ENCODE measurements at regions of chr17 and their contacts with region 1.

Region 1: DNA sequence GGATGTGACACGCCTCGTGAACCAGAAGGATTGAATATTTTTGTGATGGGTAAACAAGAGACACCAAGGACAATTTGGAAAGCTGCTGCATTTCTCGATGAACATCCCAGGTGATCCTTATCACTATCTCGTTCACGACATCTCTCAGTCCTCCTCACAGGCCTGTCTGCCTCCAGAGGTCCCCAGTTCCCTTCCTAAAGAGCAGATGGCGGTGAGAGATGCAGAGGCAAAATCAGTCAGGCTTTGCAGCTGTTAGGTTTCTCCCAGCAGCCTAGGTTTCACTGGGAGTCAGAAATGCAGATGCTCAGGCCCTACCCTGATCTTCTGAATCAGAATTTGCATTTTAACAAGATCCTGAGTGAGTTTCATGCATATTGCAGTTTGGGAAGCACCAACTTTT is 23.6 kb downstream of the SCPEP1 start:
- DNase-seq: no peak
- ATAC-seq: no peak
- H3K4me3 Mint-ChIP-seq: no peak overlapping the region
- H3K27ac Mint-ChIP-seq: no peak overlapping the region
- H3K4me1 Mint-ChIP-seq: no peaks in the 10 kb centered on the region
- H3K27me3 Mint-ChIP-seq: no peaks in the 10 kb centered on the region

Region 2: DNA sequence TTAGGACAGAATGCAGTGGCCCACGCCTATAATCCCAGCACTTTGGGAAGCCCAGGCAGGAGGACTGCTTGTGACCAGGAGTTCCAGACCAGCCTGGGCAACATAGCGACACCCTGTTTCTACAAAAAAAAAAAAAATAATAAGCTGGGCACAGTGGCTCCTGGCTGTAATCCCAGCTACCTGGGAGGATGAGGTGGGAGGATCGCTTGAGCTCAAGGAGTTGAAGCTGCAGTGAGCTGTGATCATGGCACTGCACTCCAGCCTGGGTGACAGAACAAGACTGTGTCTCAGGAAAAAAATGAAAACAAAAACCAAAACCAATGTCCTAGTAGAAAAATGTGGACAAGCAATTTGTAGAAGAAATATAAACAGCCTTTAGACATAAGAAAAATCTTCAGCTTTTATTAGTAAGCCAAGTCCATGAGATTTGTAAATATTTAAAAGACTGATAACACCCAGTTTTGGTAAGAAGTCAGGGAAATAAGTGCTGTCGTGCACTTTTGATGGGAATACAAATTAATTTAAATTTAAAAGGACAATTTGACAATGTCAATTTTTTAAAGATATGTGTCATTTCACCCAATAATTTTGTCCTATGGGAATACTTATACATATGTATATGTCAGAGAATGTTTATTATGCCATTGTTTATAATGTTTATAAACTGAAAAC is 12.5 kb before region 1 on chr17:
- CTCF ChIA-PET with region 1: interaction called, 13 read pairs
- POLR2A ChIA-PET with region 1: no interaction called
- intact Hi-C with region 1: no loop called
- DNase-seq: no peak
- ATAC-seq: no peak
- H3K4me3 Mint-ChIP-seq: no peak overlapping the region
- H3K27ac Mint-ChIP-seq: no peak overlapping the region
- H3K4me1 Mint-ChIP-seq: no peaks in the 10 kb centered on the region
- H3K27me3 Mint-ChIP-seq: no peaks in the 10 kb centered on the region

Region 3: GRCh38 chr17:57197466-57198071 is 196.0 kb after region 1 on chr17:
- CTCF ChIA-PET with region 1: no interaction called
- POLR2A ChIA-PET with region 1: no interaction called
- intact Hi-C with region 1: no loop called
- DNase-seq: no peak
- ATAC-seq: no peak
- H3K4me3 Mint-ChIP-seq: no peak overlapping the region
- H3K27ac Mint-ChIP-seq: no peak overlapping the region
- H3K4me1 Mint-ChIP-seq: peaks cover 7% of the 10 kb centered on the region
- H3K27me3 Mint-ChIP-seq: no peaks in the 10 kb centered on the region